ENCODE measurements at regions of chr21 and their contacts with region 1.

Region 1: DNA sequence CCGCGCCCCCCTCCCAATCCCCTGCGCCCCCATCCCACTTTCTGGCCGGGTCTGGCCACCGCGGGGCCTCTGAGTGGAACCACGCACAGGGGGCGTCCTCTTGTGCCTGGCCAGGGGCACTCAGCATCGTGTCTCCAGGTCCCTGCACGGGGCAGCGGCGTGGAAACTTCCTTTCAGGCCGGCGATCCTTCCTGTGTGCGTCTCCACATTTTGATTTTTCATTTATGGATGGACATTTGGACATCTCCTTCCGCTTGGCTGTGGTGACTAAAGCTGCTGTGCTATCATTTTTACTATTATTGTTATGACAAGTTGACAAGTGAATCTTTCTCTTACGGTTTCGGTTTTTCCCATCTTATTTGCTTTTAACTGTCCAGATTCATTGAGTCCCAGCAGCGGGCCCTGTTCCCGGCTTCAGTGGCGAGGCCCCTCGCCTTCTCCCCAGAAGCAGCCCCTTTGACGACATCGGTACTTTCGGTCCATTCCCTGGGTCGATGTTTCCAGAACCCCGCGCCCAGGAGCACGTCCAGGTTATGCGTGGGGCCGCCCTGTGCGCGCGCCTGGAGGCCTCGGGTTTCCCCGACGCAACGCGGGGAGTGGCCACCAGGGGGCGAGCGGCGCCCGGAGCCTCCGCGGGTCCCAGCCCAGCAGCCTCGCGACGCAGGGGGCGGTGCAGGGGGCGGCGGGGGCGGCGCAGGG is 12.4 kb upstream of the SLC19A1 start:
- DNase-seq: peak; percentile 64 to 90
- H3K4me3 ChIP-seq: peak overlapping the region; percentile 53 to 61
- H3K27ac ChIP-seq: peak overlapping the region in 1 of 2 donors; percentile 70
- H3K4me1 ChIP-seq: peaks cover 0 to 13% (median 8%) of the 10 kb centered on the region in 4 donors
- H3K27me3 ChIP-seq: peaks cover 0 to 54% of the 10 kb centered on the region in 2 donors
- CTCF ChIP-seq: peak; percentile 72 to 84

Region 2: DNA sequence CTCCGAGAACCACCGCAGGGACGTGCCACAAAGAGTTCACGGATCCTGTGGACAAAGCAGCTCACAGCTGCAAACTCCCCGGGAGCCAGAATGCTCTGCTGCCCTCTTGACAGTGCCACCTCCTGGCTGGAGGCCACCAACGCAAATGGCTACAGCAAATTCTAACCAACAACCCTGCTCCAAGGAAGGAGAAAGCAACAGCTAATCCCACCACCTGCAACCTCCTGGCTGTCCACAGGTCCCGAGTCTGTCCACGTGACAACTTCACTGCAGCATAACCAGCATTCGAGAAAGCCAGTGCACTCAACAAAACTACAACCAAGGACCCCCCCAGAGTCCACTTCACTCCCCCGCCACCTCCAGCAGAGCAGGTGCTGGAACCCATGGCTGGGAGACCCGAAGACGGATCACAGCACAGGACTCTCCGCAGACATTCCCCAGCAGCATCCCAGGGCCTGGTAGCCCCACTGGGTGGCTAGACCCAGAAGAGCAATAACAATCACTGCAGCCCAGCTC is 284.3 kb before region 1 on chr21:
- intact Hi-C with region 1: no loop called
- DNase-seq: peak; percentile 4 to 56
- H3K4me3 ChIP-seq: no peak overlapping the region
- H3K27ac ChIP-seq: no peak overlapping the region
- H3K4me1 ChIP-seq: no peaks in the 10 kb centered on the region
- H3K27me3 ChIP-seq: no peaks in the 10 kb centered on the region
- CTCF ChIP-seq: no peak

Region 3: DNA sequence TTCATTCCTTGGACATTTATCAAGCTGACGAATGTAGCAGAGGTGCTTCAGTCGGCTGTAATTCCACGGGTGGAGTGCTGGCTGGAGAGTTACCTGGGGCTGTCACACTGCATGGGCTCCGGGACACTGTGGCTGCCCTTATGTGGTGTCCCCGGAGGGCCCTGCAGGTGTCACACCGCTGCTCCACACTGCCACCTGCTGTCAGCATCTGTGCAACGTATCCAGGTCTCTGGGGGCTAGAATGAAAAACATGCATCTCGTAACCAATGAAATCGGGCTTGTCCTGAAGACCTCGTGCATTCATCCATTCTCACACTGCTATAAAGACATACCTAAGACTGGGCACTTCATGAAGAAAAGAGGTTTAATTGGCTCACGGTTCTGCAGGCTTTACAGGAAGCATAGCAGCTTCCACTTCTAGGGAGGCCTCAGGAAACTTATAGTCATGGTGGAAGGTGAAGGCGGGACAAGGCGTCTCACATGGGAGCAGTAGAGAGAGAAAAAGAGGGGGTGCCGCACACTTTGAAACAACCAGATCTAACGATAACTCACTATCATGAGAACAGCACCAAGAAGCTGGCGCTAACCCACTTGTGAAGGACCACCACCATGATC is 42.2 kb after region 1 on chr21:
- intact Hi-C with region 1: loop called (anchors 5 kb)
- DNase-seq: peak; percentile 44 to 74
- H3K4me3 ChIP-seq: no peak overlapping the region
- H3K27ac ChIP-seq: no peak overlapping the region
- H3K4me1 ChIP-seq: peaks cover 0 to 5% (median 0%) of the 10 kb centered on the region in 4 donors
- H3K27me3 ChIP-seq: peaks cover 0 to 71% of the 10 kb centered on the region in 2 donors
- CTCF ChIP-seq: peak; percentile 63 to 68

Region 4: GRCh38 chr21:45749974-45750373 is 195.3 kb after region 1 on chr21:
- intact Hi-C with region 1: no loop called
- DNase-seq: no peak
- H3K4me3 ChIP-seq: no peak overlapping the region
- H3K27ac ChIP-seq: no peak overlapping the region
- H3K4me1 ChIP-seq: no peaks in the 10 kb centered on the region
- H3K27me3 ChIP-seq: peaks cover 0 to 13% of the 10 kb centered on the region in 2 donors
- CTCF ChIP-seq: no peak

Region 5: DNA sequence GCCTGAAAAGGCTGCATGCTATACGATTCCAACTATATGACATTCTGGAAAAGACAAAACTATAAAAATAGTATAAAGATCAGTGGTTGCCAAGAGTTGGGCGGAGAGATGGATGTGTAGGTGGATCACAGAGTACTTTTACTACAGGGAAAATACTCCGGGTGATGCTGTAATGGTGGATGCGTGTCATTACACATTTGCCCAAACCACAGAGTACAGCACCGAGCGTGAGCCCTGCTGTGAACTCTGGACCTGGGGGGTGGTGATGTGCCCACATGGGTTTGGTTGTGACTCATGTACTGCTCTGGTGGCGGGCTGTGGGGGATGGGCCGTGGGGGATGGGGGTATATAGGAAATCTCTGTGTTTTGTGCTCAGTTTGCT is 264.3 kb after region 1 on chr21:
- intact Hi-C with region 1: loop called (anchors 5 kb)
- DNase-seq: peak in 1 of 2 donors; percentile 56
- H3K4me3 ChIP-seq: no peak overlapping the region
- H3K27ac ChIP-seq: no peak overlapping the region
- H3K4me1 ChIP-seq: no peaks in the 10 kb centered on the region
- H3K27me3 ChIP-seq: peaks cover 0 to 40% of the 10 kb centered on the region in 2 donors
- CTCF ChIP-seq: no peak

Region 6: DNA sequence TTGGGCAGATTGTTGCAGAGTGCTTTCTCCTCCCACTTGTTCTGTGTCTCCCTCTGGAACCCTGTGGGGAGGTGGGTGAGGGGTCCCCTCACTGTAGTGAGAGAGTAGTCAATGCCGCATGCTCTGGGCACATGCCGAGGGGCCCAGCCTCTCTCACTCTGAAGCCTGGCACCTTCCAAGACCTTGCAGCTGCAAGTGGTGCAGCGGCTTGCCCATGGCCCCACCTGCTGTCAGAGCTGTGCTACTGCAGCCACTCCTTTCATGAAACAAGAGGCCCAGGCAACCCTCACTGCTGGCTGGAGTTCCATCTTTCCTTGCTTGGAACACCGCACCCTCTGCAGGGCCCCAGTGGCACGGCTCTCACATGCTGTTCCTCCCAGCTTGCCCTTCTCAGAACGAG is 368.5 kb after region 1 on chr21:
- intact Hi-C with region 1: loop called (anchors 5 kb)
- DNase-seq: peak; percentile 55 to 84
- H3K4me3 ChIP-seq: no peak overlapping the region
- H3K27ac ChIP-seq: no peak overlapping the region
- H3K4me1 ChIP-seq: no peaks in the 10 kb centered on the region
- H3K27me3 ChIP-seq: no peaks in the 10 kb centered on the region
- CTCF ChIP-seq: peak; percentile 87 to 96